CD4-positive, alpha-beta T cell (primary cell): ENCODE measurements at regions of chr6 and their contacts with region 1.

Region 1: GRCh38 chr6:71399279-71399678 is 110.7 kb downstream of the OGFRL1 start:
- DNase-seq: no peak
- ATAC-seq: no peak
- H3K4me3 ChIP-seq: no peak overlapping the region
- H3K4me3 Mint-ChIP-seq: no peak overlapping the region
- H3K27ac ChIP-seq: no peak overlapping the region
- H3K27ac Mint-ChIP-seq: no peak overlapping the region
- H3K4me1 ChIP-seq: no peaks in the 10 kb centered on the region
- H3K4me1 Mint-ChIP-seq: no peaks in the 10 kb centered on the region
- H3K27me3 ChIP-seq: no peaks in the 10 kb centered on the region
- H3K27me3 Mint-ChIP-seq: peaks cover 8% of the 10 kb centered on the region
- CTCF ChIP-seq: no peak

Region 2: GRCh38 chr6:70616728-70617260 is 782.5 kb before region 1 on chr6:
- CTCF ChIA-PET with region 1: no interaction called
- POLR2A ChIA-PET with region 1: no interaction called
- intact Hi-C with region 1: no loop called
- DNase-seq: no peak
- ATAC-seq: no peak
- H3K4me3 ChIP-seq: no peak overlapping the region
- H3K4me3 Mint-ChIP-seq: no peak overlapping the region
- H3K27ac ChIP-seq: no peak overlapping the region
- H3K27ac Mint-ChIP-seq: no peak overlapping the region
- H3K4me1 ChIP-seq: no peaks in the 10 kb centered on the region
- H3K4me1 Mint-ChIP-seq: no peaks in the 10 kb centered on the region
- H3K27me3 ChIP-seq: peaks cover 0 to 2% of the 10 kb centered on the region in 2 experiments
- H3K27me3 Mint-ChIP-seq: no peaks in the 10 kb centered on the region
- CTCF ChIP-seq: no peak

Region 3: GRCh38 chr6:71420693-71421328 is 21.5 kb after region 1 on chr6:
- CTCF ChIA-PET with region 1: no interaction called
- POLR2A ChIA-PET with region 1: no interaction called
- intact Hi-C with region 1: loop called in 1 of 2 experiments (anchors 2 kb)
- DNase-seq: peak in 2 of 14 experiments; percentile 6 to 16
- ATAC-seq: no peak
- H3K4me3 ChIP-seq: peak overlapping the region; percentile 14
- H3K4me3 Mint-ChIP-seq: peak overlapping the region; percentile 23
- H3K27ac ChIP-seq: no peak overlapping the region
- H3K27ac Mint-ChIP-seq: no peak overlapping the region
- H3K4me1 ChIP-seq: peaks cover 7% of the 10 kb centered on the region
- H3K4me1 Mint-ChIP-seq: peaks cover 13% of the 10 kb centered on the region
- H3K27me3 ChIP-seq: peaks cover 16 to 68% of the 10 kb centered on the region in 2 experiments
- H3K27me3 Mint-ChIP-seq: peaks cover 87% of the 10 kb centered on the region
- CTCF ChIP-seq: no peak